ENCODE measurements at regions of chr6 and their contacts with region 1.

Region 1: GRCh38 chr6:42050266-42051032 is at the start of gene TAF8:
- DNase-seq: peak; percentile 95
- ATAC-seq: peak; percentile 69
- H3K4me3 ChIP-seq: peak within 1 kb of the TSS; percentile 86 to 100 (median 93)
- H3K4me3 Mint-ChIP-seq: peak within 1 kb of the TSS; percentile 99
- H3K27ac ChIP-seq: peak within 1 kb of the TSS; percentile 78 to 81
- H3K27ac Mint-ChIP-seq: peak within 1 kb of the TSS; percentile 99
- H3K4me1 ChIP-seq: peaks cover 43 to 45% of the 10 kb centered on the region in 2 donors
- H3K4me1 Mint-ChIP-seq: peaks cover 61% of the 10 kb centered on the region
- H3K27me3 ChIP-seq: no peaks in the 10 kb centered on the region
- H3K27me3 Mint-ChIP-seq: no peaks in the 10 kb centered on the region
- CTCF ChIP-seq: no peak
- total RNA-seq, gene TAF8: 62.1 and 67.0 TPM in 2 replicates

Region 2: DNA sequence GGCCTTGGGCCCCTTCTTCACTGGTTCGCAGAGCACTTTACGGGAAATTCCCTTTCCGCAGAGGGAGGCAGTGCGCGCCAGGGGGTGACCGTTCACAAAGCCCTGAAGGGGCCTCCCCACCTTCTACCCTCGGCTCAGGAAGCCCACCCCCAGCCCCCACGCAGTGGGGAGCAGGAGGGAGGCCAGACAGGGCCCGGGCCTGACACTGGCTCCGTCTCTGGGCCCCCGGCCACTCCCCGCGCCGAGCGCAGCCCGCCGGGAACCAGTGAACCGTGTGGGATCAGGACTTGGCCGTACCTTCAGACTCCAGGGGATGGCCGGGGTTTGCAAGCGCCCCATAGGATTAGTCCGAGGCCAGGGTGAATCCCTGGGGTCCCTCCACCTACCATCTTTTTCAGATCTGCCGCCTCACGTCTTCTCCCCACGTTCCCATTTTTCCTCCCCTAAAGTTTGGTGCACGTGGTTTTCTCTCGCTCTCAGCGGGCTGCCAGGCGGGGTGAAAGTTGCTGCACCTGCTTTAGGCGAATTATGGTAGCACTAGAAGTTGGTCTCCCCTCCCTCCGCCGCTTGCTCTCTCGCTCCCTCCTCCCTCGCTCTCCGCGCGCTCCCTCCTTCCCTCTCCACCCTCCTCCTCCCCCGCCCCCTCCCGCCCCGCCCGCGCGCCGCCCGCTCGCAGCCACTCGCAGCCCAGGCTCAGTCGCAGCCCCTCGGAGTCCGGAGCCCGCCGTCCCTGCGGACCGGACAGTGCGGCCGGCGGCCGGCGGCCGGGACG is 504.6 kb before region 1 on chr6 and contains the start of gene FOXP4:
- CTCF ChIA-PET with region 1: no interaction called
- POLR2A ChIA-PET with region 1: no interaction called
- intact Hi-C with region 1: loop called (anchors 5 kb)
- DNase-seq: peak; percentile 91
- ATAC-seq: peak; percentile 84
- H3K4me3 ChIP-seq: peak within 1 kb of the TSS; percentile 35 to 75 (median 70)
- H3K4me3 Mint-ChIP-seq: peak within 1 kb of the TSS; percentile 95
- H3K27ac ChIP-seq: peak within 1 kb of the TSS; percentile 11 to 32
- H3K27ac Mint-ChIP-seq: peak within 1 kb of the TSS; percentile 91
- H3K4me1 ChIP-seq: peaks cover 25 to 39% of the 10 kb centered on the region in 2 donors
- H3K4me1 Mint-ChIP-seq: peaks cover 33% of the 10 kb centered on the region
- H3K27me3 ChIP-seq: peaks cover 0 to 3% (median 0%) of the 10 kb centered on the region in 4 experiments
- H3K27me3 Mint-ChIP-seq: no peaks in the 10 kb centered on the region
- CTCF ChIP-seq: no peak
- total RNA-seq, gene FOXP4: 37.5 and 38.7 TPM in 2 replicates

Region 3: GRCh38 chr6:41920921-41921711 is 129.3 kb before region 1 on chr6 and contains the starts of genes BYSL and MED20:
- CTCF ChIA-PET with region 1: interaction called, 128 read pairs
- POLR2A ChIA-PET with region 1: interaction called, 13 read pairs
- intact Hi-C with region 1: loop called (anchors 1 kb)
- DNase-seq: peak; percentile 98
- ATAC-seq: peak; percentile 93
- H3K4me3 ChIP-seq: peak within 1 kb of the TSS; percentile 67 to 99 (median 97)
- H3K4me3 Mint-ChIP-seq: peak within 1 kb of the TSS; percentile 98
- H3K27ac ChIP-seq: peak within 1 kb of the TSS; percentile 91 to 96
- H3K27ac Mint-ChIP-seq: peak within 1 kb of the TSS; percentile 98
- H3K4me1 ChIP-seq: peaks cover 26 to 29% of the 10 kb centered on the region in 2 donors
- H3K4me1 Mint-ChIP-seq: peaks cover 47% of the 10 kb centered on the region
- H3K27me3 ChIP-seq: no peaks in the 10 kb centered on the region
- H3K27me3 Mint-ChIP-seq: no peaks in the 10 kb centered on the region
- CTCF ChIP-seq: peak; percentile 93
- total RNA-seq, gene BYSL: 10.5 and 11.1 TPM in 2 replicates
- total RNA-seq, gene MED20: 18.2 and 24.2 TPM in 2 replicates

Region 4: DNA sequence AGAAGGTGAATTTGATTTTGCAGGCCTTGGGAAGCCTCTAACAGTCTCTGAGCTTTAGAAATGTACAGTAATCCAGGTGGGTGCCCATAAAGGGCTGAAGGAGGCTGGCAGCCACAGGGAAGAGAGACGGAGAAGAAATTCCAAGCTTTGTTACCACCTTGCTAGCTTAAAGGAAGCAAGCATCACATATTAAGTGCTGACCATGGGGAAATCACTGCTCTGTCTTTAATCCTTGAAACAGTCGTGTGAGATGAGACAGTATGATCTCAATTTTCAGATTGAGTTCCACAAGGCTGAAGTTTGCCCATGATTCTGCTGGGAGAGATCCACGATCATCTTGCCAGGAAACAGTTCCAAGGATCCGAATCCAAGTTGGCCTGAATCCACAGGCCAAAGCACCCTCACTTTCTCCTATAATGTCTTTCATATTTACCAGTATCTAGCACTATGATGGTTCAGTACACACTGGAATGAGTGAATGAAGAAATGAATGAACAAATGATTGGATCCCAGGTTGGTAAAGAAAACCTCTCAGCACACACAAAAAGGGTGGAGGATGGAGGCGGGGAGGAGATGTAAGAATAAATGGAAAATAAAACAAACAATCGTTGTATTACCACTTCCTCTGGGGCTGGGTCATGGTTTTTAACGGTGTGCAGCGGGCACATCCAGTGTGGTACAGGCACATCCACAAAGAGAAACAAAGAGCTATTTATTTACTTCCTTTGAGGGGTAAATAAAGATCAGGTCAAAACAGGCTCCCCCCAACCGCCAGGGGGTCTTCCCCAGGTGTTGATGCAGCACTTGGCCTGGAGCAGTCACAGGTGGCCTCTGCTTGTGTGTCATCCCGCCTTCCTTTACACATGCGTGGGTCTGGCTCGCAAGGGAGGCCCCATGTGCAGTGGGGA is 28.3 kb before region 1 on chr6:
- CTCF ChIA-PET with region 1: interaction called, 130 read pairs
- POLR2A ChIA-PET with region 1: interaction called, 11 read pairs
- intact Hi-C with region 1: loop called (anchors 1 kb)
- DNase-seq: peak; percentile 86
- ATAC-seq: peak; percentile 46
- H3K4me3 ChIP-seq: peak overlapping the region in 3 of 5 experiments; percentile 4 to 46 (median 17)
- H3K4me3 Mint-ChIP-seq: peak overlapping the region; percentile 77
- H3K27ac ChIP-seq: peak overlapping the region; percentile 79 to 93
- H3K27ac Mint-ChIP-seq: peak overlapping the region; percentile 95
- H3K4me1 ChIP-seq: peaks cover 74 to 78% of the 10 kb centered on the region in 2 donors
- H3K4me1 Mint-ChIP-seq: peaks cover 77% of the 10 kb centered on the region
- H3K27me3 ChIP-seq: no peaks in the 10 kb centered on the region
- H3K27me3 Mint-ChIP-seq: no peaks in the 10 kb centered on the region
- CTCF ChIP-seq: peak; percentile 13

Region 5: DNA sequence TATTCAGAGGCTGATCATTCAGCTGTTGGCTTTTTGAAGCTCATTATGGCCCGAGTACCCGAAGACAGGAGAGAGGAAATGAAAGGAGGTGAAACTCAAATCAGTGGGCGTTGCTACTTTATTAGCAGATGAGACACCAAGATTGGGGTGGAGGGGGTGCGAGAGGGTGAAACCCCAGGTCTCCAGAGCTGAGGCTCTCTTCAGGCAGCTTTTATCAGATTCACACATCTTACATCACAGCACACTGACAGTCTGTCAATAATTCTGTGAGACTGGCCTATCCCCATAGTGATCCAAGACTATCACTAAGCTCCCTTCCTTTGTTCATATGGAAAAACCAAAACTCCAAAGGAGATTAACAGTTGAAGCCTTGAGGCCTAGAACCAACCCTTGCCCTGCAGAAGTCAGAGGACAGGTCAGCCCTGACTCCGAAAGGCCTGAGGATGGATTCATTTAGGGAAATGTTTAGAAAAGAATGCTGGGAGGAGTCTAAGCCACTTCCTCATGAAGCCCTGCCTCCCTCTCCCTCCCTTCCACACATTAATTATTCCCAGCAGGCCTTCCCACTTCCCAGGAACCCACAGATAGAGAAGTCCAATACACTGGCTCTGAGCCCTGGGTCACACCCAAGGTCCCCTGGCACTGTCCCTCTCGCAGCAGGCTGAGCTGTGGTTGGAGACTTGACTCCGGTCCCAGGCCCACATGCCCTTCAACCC is 378.0 kb after region 1 on chr6:
- CTCF ChIA-PET with region 1: no interaction called
- POLR2A ChIA-PET with region 1: no interaction called
- intact Hi-C with region 1: no loop called
- DNase-seq: peak; percentile 26
- ATAC-seq: peak; percentile 24
- H3K4me3 ChIP-seq: no peak overlapping the region
- H3K4me3 Mint-ChIP-seq: peak overlapping the region; percentile 2
- H3K27ac ChIP-seq: no peak overlapping the region
- H3K27ac Mint-ChIP-seq: peak overlapping the region; percentile 60
- H3K4me1 ChIP-seq: peaks cover 9 to 13% of the 10 kb centered on the region in 2 donors
- H3K4me1 Mint-ChIP-seq: peaks cover 20% of the 10 kb centered on the region
- H3K27me3 ChIP-seq: no peaks in the 10 kb centered on the region
- H3K27me3 Mint-ChIP-seq: no peaks in the 10 kb centered on the region
- CTCF ChIP-seq: no peak

Region 6: GRCh38 chr6:42563697-42564505 is 513.5 kb after region 1 on chr6 and contains the start of gene UBR2:
- CTCF ChIA-PET with region 1: no interaction called
- POLR2A ChIA-PET with region 1: interaction called, 3 read pairs
- intact Hi-C with region 1: loop called (anchors 10 kb)
- DNase-seq: peak; percentile 95
- ATAC-seq: peak; percentile 96
- H3K4me3 ChIP-seq: peak within 1 kb of the TSS; percentile 78 to 98 (median 91)
- H3K4me3 Mint-ChIP-seq: peak within 1 kb of the TSS; percentile 98
- H3K27ac ChIP-seq: peak within 1 kb of the TSS; percentile 90 to 91
- H3K27ac Mint-ChIP-seq: peak within 1 kb of the TSS; percentile 98
- H3K4me1 ChIP-seq: peaks cover 19 to 25% of the 10 kb centered on the region in 2 donors
- H3K4me1 Mint-ChIP-seq: peaks cover 36% of the 10 kb centered on the region
- H3K27me3 ChIP-seq: no peaks in the 10 kb centered on the region
- H3K27me3 Mint-ChIP-seq: no peaks in the 10 kb centered on the region
- CTCF ChIP-seq: peak; percentile 41
- total RNA-seq, gene UBR2: 56.2 and 61.5 TPM in 2 replicates

Measured in B cell (primary cell).